ENCODE measurements at regions of chr13 and their contacts with region 1.

Region 1: GRCh38 chr13:97257800-97258799 is 36.0 kb downstream of the MBNL2 start:
- DNase-seq: peak; percentile 98
- H3K4me3 ChIP-seq: no peak overlapping the region
- H3K27ac ChIP-seq: peak overlapping the region; percentile 98
- H3K4me1 ChIP-seq: peaks cover 76% of the 10 kb centered on the region
- H3K27me3 ChIP-seq: no peaks in the 10 kb centered on the region
- CTCF ChIP-seq: peak in 1 of 2 donors; percentile 21
- POLR2A ChIP-seq: peak; percentile 46

Region 2: DNA sequence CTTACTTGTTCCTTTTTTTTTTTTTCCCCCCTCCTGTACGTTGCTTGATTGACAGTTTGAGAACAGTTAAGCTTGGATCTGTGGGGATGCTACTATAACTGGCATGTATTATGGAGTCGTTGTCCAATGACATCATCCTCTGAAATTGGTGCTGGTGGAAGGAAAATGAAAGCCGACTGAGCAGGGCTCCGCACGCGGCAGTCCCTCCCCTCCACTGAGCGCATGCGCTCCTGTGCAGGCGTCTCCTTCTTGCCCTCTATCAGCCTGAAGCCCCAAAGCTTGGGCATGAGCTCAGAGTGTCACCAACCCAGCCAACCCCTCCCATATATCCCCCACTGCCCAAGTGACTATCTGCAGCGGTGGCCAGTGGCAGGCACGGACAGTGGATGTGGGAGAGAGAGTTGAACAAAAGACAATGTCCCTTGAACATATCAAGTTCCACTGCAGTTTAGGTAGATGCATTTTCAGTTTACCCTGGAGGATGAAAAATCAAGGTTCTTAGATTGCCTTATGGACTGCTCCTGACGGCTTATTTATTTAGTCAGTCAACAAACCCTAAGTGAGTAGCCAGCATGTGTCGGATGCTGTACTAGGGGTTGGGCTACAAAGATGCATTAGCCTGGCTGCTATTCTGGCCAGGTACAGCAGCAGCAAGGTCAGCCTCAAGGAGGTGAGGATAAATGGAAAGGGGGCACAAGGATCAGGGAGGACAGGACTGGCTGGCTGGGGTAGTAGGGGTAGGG is 15.2 kb before region 1 on chr13:
- CTCF ChIA-PET with region 1: interaction called, 4 read pairs
- POLR2A ChIA-PET with region 1: interaction called, 3 read pairs
- dilution Hi-C with region 1: no loop called
- intact Hi-C with region 1: loop called (anchors 1 kb)
- DNase-seq: peak; percentile 43
- H3K4me3 ChIP-seq: no peak overlapping the region
- H3K27ac ChIP-seq: peak overlapping the region; percentile 79
- H3K4me1 ChIP-seq: peaks cover 93% of the 10 kb centered on the region
- H3K27me3 ChIP-seq: no peaks in the 10 kb centered on the region
- CTCF ChIP-seq: no peak
- POLR2A ChIP-seq: no peak

Region 3: GRCh38 chr13:97275265-97275664 is 17.2 kb after region 1 on chr13:
- CTCF ChIA-PET with region 1: interaction called, 6 read pairs
- POLR2A ChIA-PET with region 1: interaction called, 3 read pairs
- dilution Hi-C with region 1: no loop called
- intact Hi-C with region 1: loop called (anchors 1 kb)
- DNase-seq: peak; percentile 93
- H3K4me3 ChIP-seq: no peak overlapping the region
- H3K27ac ChIP-seq: peak overlapping the region; percentile 82
- H3K4me1 ChIP-seq: peaks cover 75% of the 10 kb centered on the region
- H3K27me3 ChIP-seq: no peaks in the 10 kb centered on the region
- CTCF ChIP-seq: no peak
- POLR2A ChIP-seq: peak; percentile 31

Region 4: DNA sequence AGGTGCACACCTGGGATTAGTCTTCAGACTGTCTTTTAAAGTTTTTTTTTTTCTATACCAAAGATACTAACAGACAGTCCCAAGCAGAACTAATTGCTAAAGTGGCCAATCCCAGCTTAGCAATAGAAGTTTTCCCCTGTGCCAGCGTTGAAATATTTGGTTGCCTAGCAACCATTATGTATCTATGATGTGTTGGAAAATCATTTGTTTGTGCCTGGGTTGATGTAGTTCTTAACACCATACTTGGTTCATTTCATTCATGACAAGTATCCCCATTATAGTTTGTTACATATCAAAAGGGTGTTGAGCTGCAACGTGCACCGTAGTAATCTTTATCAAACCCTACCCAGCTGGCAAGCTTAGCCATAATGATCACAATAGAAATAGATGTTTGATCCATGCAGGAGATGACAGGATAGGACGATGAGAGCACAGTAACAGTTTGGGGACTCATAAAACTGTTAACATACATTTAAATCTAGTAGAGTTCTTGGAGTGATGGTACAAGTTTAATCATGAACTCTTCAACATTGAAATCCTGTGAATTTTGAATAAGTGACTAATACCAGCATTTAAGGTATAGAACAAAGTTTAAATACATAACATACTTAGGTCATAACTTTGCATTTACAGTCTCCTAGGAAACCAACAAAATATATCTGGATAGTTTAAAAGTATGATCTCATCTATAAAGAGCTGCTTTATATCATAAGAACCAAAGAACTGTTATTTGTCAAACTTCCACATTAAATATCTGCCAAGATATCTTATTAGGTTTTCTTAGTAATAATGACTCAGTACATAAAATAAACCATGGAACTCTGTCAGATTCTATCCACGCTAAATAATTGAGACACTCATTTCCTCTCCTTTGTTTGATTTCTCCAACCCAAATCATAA is 37.4 kb after region 1 on chr13:
- CTCF ChIA-PET with region 1: interaction called, 5 read pairs
- POLR2A ChIA-PET with region 1: no interaction called
- dilution Hi-C with region 1: no loop called
- intact Hi-C with region 1: loop called (anchors 1 kb)
- DNase-seq: peak; percentile 85
- H3K4me3 ChIP-seq: peak overlapping the region in 1 of 3 experiments; percentile 29
- H3K27ac ChIP-seq: peak overlapping the region; percentile 98
- H3K4me1 ChIP-seq: peaks cover 37% of the 10 kb centered on the region
- H3K27me3 ChIP-seq: no peaks in the 10 kb centered on the region
- CTCF ChIP-seq: no peak
- POLR2A ChIP-seq: peak; percentile 24

Region 5: GRCh38 chr13:97307882-97308624 is 50.0 kb after region 1 on chr13:
- CTCF ChIA-PET with region 1: interaction called, 3 read pairs
- POLR2A ChIA-PET with region 1: no interaction called
- dilution Hi-C with region 1: no loop called
- intact Hi-C with region 1: loop called (anchors 1 kb)
- DNase-seq: peak; percentile 87
- H3K4me3 ChIP-seq: no peak overlapping the region
- H3K27ac ChIP-seq: peak overlapping the region; percentile 83
- H3K4me1 ChIP-seq: peaks cover 38% of the 10 kb centered on the region
- H3K27me3 ChIP-seq: no peaks in the 10 kb centered on the region
- CTCF ChIP-seq: no peak
- POLR2A ChIP-seq: no peak

Region 6: GRCh38 chr13:97333983-97334382 is 75.9 kb after region 1 on chr13:
- CTCF ChIA-PET with region 1: no interaction called
- POLR2A ChIA-PET with region 1: no interaction called
- dilution Hi-C with region 1: no loop called
- intact Hi-C with region 1: loop called (anchors 2 kb)
- DNase-seq: peak; percentile 43
- H3K4me3 ChIP-seq: no peak overlapping the region
- H3K27ac ChIP-seq: no peak overlapping the region
- H3K4me1 ChIP-seq: peaks cover 19% of the 10 kb centered on the region
- H3K27me3 ChIP-seq: no peaks in the 10 kb centered on the region
- CTCF ChIP-seq: peak in 1 of 2 donors; percentile 2
- POLR2A ChIP-seq: no peak

Region 7: GRCh38 chr13:97468331-97468730 is 210.2 kb after region 1 on chr13:
- CTCF ChIA-PET with region 1: no interaction called
- POLR2A ChIA-PET with region 1: no interaction called
- dilution Hi-C with region 1: no loop called
- intact Hi-C with region 1: no loop called
- DNase-seq: no peak
- H3K4me3 ChIP-seq: no peak overlapping the region
- H3K27ac ChIP-seq: no peak overlapping the region
- H3K4me1 ChIP-seq: no peaks in the 10 kb centered on the region
- H3K27me3 ChIP-seq: no peaks in the 10 kb centered on the region
- CTCF ChIP-seq: no peak
- POLR2A ChIP-seq: no peak